Colonic mucosa (tissue), 4 donors: ENCODE measurements at regions of chr9 and their contacts with region 1.

Region 1: GRCh38 chr9:26744191-26744965 is 148.2 kb downstream of the CAAP1 start:
- DNase-seq: no peak
- H3K4me3 ChIP-seq: no peak overlapping the region
- H3K27ac ChIP-seq: no peak overlapping the region
- H3K4me1 ChIP-seq: no peaks in the 10 kb centered on the region
- H3K27me3 ChIP-seq: no peaks in the 10 kb centered on the region
- CTCF ChIP-seq: peak; percentile 81

Region 2: DNA sequence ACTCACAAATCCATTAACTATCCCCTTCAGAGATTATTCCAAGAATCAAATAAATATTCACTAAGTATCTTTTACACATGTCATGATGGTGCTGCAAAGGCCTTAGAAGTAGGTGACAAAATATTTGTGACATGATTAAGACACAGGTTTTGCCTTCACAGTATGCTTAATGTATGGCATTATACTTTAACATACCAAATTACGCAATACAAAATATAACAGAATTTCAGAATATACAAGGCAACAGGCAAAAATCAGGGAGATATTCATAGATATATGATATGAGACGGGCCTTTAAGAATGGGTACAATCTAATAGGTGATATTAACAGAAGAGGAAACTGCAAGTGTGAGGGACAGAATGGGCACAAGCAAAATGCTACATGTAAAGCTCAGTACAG is 106.6 kb after region 1 on chr9:
- intact Hi-C with region 1: loop called (anchors 5 kb)
- DNase-seq: no peak
- H3K4me3 ChIP-seq: no peak overlapping the region
- H3K27ac ChIP-seq: no peak overlapping the region
- H3K4me1 ChIP-seq: no peaks in the 10 kb centered on the region
- H3K27me3 ChIP-seq: no peaks in the 10 kb centered on the region
- CTCF ChIP-seq: no peak